Activated CD4-positive, alpha-beta T cell treated with anti-CD3 and anti-CD28 coated beads for 36 hours (primary cell): ENCODE measurements at regions of chr1 and their contacts with region 1.

Region 1: GRCh38 chr1:3283849-3284248 is 170.6 kb upstream of the ARHGEF16 start:
- DNase-seq: peak; percentile 57
- ATAC-seq: no peak
- H3K4me3 Mint-ChIP-seq: no peak overlapping the region
- H3K27ac Mint-ChIP-seq: no peak overlapping the region
- H3K4me1 Mint-ChIP-seq: no peaks in the 10 kb centered on the region
- H3K27me3 Mint-ChIP-seq: peaks cover 3% of the 10 kb centered on the region

Region 2: GRCh38 chr1:3186513-3186921 is 97.3 kb before region 1 on chr1:
- CTCF ChIA-PET with region 1: no interaction called
- POLR2A ChIA-PET with region 1: no interaction called
- intact Hi-C with region 1: no loop called
- DNase-seq: no peak
- ATAC-seq: no peak
- H3K4me3 Mint-ChIP-seq: no peak overlapping the region
- H3K27ac Mint-ChIP-seq: no peak overlapping the region
- H3K4me1 Mint-ChIP-seq: no peaks in the 10 kb centered on the region
- H3K27me3 Mint-ChIP-seq: peaks cover 6% of the 10 kb centered on the region

Region 3: DNA sequence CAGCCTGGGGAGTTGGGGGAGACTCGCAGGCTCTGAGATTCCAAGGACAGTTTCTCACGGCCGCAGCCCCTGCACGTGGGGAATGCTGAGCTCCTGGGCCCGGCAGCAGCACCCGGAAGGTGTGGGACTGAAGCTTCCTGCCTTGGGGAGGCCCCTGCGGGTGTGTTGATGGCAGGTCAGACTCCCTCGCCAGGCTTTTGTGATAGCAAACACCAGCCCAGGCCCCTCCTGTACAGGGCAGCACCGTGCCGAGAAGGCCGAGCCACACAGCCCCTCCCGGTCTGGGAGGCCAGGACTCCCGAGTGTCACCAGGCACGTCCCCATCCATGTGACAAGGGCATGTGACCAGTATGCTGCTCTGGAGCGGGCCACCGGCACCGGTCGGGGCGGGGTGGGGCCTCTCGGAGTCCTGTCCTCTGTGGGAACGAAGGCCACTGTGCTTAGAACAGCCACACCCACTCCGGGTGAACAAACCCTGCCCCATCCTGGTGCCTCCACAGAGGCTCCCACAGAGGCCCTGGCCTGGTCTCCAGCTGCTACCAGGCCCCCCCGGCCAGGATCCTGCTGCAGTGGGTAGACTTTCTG is 139.5 kb after region 1 on chr1:
- CTCF ChIA-PET with region 1: no interaction called
- POLR2A ChIA-PET with region 1: no interaction called
- intact Hi-C with region 1: loop called in 1 of 2 experiments (anchors 10 kb)
- DNase-seq: no peak
- ATAC-seq: no peak
- H3K4me3 Mint-ChIP-seq: no peak overlapping the region
- H3K27ac Mint-ChIP-seq: no peak overlapping the region
- H3K4me1 Mint-ChIP-seq: no peaks in the 10 kb centered on the region
- H3K27me3 Mint-ChIP-seq: peaks cover 3% of the 10 kb centered on the region